ENCODE measurements at regions of chr6 and their contacts with region 1.

Region 1: GRCh38 chr6:113858480-113859348 is 1.6 kb downstream of the MARCKS start:
- H3K4me3 Mint-ChIP-seq: no peak overlapping the region
- H3K27ac Mint-ChIP-seq: no peak overlapping the region
- H3K4me1 Mint-ChIP-seq: peaks cover 17% of the 10 kb centered on the region
- H3K27me3 Mint-ChIP-seq: peaks cover 5% of the 10 kb centered on the region

Region 2: DNA sequence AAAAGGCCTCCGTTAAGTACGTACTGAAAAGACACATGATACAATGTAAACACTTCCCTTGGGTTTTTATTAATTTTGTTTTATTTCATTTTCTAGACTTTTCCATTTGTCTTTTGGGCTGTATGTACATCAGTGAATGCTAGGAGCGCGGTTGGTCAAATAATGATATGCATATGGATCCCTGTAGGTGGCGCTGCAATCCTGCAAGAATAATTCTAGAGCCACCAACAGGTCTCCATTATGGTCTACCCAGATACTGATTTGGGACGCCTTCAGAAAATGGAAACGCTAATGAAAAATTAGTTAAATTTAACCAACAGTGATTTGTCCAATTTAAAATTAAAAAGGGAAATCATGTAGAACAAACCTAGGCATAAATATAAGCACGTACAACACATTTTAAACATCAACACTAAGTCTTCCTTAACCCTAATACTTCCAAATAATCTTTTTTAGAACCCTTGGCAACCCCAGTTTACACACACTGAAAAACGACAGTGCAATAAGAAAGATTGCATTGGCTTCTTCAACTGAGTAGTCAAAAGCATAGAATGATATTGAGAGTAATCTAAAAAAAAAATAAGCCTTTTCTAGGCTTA is 1078.1 kb before region 1 on chr6:
- intact Hi-C with region 1: loop called (anchors 2 kb)
- H3K4me3 Mint-ChIP-seq: no peak overlapping the region
- H3K27ac Mint-ChIP-seq: no peak overlapping the region
- H3K4me1 Mint-ChIP-seq: no peaks in the 10 kb centered on the region
- H3K27me3 Mint-ChIP-seq: no peaks in the 10 kb centered on the region

Region 3: GRCh38 chr6:113414511-113414910 is 444.2 kb before region 1 on chr6:
- intact Hi-C with region 1: loop called (anchors 10 kb)
- H3K4me3 Mint-ChIP-seq: no peak overlapping the region
- H3K27ac Mint-ChIP-seq: no peak overlapping the region
- H3K4me1 Mint-ChIP-seq: peaks cover 13% of the 10 kb centered on the region
- H3K27me3 Mint-ChIP-seq: no peaks in the 10 kb centered on the region

Region 4: DNA sequence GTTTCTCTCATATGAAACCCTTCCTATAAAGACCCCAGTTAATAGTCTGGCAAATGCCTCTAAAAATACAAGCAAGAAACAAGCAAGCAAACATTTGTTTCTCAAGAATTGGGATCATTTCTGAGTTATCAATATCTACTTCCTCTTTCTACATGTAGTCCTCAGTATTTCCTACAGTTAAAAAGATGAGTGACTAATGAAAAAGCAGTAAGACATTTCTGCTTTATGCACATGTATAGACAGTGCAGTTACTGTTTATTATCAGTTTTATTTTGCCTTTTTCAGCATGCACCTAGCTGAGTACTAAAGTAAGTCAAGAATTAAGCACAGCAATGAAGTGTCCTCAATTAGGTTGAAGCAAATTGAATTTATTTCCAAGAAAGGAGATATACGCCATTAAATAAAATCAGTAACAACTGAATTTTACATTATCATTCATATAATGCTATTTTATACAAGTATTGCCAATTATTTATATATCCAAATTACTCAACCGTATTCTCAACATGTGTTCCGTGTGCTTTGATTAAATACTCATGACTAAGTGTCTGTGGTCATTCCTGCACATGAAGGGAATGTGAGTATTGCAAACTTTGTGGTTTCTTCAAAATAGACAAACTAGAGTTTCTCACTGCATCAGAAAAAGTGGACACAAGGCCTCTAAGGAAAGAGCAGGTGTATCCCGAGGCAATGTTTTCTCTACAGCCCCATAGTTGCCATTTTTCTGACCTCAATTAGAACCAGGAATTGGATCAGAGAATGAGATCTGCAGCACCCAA is 160.9 kb before region 1 on chr6:
- intact Hi-C with region 1: loop called (anchors 2 kb)
- H3K4me3 Mint-ChIP-seq: no peak overlapping the region
- H3K27ac Mint-ChIP-seq: peak overlapping the region; percentile 82
- H3K4me1 Mint-ChIP-seq: peaks cover 20% of the 10 kb centered on the region
- H3K27me3 Mint-ChIP-seq: no peaks in the 10 kb centered on the region

Region 5: DNA sequence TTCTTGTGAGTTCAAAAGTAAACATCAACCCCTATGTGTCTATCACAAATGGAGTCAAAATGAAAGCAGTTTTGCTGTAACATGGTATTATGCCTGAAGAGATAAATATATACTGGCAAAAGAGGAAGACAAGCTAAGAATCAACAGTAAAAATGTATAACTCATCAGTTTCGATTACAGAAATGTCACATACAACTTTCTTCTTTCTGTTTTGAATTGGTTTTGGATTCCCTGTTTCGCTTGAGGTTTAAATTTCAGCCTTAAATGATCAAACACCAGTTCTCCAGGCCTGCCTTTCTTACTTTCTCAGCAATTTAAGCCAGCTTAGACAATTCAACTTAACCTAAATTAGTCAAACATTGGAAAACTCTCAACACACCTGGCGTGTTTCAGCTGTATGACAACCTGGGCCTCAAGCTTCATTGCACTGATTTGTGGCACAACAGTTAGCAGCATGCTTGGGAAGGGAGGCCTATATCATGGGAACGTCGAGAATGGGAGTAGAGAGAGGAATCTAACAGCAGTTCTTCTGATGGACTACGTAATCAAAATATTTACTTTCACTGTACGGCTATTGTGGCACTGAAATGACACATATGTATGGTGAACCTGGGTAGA is 53.4 kb before region 1 on chr6:
- intact Hi-C with region 1: loop called (anchors 2 kb)
- H3K4me3 Mint-ChIP-seq: no peak overlapping the region
- H3K27ac Mint-ChIP-seq: peak overlapping the region; percentile 55
- H3K4me1 Mint-ChIP-seq: peaks cover 56% of the 10 kb centered on the region
- H3K27me3 Mint-ChIP-seq: no peaks in the 10 kb centered on the region

Region 6: DNA sequence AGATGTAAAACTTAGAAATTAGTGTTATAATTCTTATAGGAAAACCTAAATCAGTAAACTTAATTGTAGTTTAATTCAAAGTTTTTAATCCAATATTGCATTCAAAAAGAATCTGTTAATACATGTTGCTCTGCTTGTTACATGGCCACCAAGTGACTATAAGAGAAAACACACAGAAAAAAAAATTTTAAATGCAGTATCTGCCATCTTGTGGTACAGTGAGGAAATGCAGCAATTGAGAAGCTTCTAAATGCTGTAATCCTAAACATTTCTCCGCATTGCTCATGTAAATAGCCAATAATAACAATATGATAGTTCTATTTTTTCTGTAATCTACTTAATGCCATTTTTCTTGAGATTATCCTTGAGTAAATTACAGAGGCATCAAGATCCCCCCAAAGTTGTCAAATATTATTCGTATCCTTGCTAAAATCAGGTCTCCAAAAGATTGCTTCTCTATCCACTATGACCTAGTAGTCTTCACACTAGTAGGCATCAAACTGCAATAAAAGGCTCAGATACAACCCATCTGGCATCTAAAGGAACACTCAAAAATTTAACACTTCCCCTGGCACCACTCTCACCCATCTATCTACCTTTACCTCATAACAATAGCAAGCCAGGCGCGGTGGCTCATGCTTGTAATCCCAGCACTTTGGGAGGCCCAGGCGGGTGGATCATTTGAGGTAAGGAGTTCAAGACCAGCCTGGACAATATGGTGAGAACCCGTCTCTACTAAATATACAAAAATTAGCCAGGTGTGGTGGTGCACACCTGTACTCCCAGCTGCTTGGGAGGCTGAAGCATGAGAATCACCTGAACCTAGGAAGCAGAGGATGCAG is 77.6 kb after region 1 on chr6:
- intact Hi-C with region 1: no loop called
- H3K4me3 Mint-ChIP-seq: no peak overlapping the region
- H3K27ac Mint-ChIP-seq: no peak overlapping the region
- H3K4me1 Mint-ChIP-seq: no peaks in the 10 kb centered on the region
- H3K27me3 Mint-ChIP-seq: no peaks in the 10 kb centered on the region